ENCODE measurements at regions of chr19 and their contacts with region 1.

Region 1: GRCh38 chr19:14405758-14406644 is 13.1 kb downstream of the DDX39A start:
- DNase-seq: peak; percentile 75 to 95 (median 88)
- ATAC-seq: peak; percentile 83
- H3K4me3 ChIP-seq: no peak overlapping the region
- H3K4me3 Mint-ChIP-seq: no peak overlapping the region
- H3K27ac ChIP-seq: peak overlapping the region; percentile 19 to 62
- H3K27ac Mint-ChIP-seq: peak overlapping the region; percentile 71
- H3K4me1 ChIP-seq: peaks cover 37% of the 10 kb centered on the region
- H3K4me1 Mint-ChIP-seq: peaks cover 22% of the 10 kb centered on the region
- H3K27me3 ChIP-seq: no peaks in the 10 kb centered on the region
- H3K27me3 Mint-ChIP-seq: no peaks in the 10 kb centered on the region
- CTCF ChIP-seq: peak; percentile 91

Region 2: DNA sequence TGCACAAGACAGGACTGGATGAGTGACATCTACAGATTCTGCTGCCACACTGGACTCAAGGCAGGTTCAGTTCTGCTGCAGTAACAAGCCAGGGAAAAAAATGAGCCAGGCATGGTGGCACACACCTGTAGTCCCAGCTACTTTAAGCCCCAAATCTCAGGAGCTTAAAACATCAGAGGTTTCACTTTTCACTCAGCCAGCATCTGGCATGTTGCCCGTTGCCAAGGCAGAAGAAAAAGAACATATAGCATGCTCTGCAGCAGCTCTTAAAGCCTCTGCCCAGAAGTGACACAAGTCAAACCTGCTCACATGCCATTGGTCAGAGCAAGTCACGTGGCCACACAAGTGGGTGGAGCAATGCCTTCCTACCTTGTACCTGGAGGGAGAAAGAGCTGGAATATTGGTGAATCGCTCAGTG is 39.5 kb before region 1 on chr19:
- CTCF ChIA-PET with region 1: interaction called, 218 read pairs
- POLR2A ChIA-PET with region 1: interaction called, 15 read pairs
- intact Hi-C with region 1: loop called (anchors 1 kb)
- DNase-seq: peak; percentile 83 to 97 (median 90)
- ATAC-seq: peak; percentile 45
- H3K4me3 ChIP-seq: no peak overlapping the region
- H3K4me3 Mint-ChIP-seq: peak overlapping the region; percentile 57
- H3K27ac ChIP-seq: peak overlapping the region; percentile 98 to 100
- H3K27ac Mint-ChIP-seq: peak overlapping the region; percentile 99
- H3K4me1 ChIP-seq: peaks cover 81% of the 10 kb centered on the region
- H3K4me1 Mint-ChIP-seq: peaks cover 68% of the 10 kb centered on the region
- H3K27me3 ChIP-seq: no peaks in the 10 kb centered on the region
- H3K27me3 Mint-ChIP-seq: no peaks in the 10 kb centered on the region
- CTCF ChIP-seq: no peak

Region 3: DNA sequence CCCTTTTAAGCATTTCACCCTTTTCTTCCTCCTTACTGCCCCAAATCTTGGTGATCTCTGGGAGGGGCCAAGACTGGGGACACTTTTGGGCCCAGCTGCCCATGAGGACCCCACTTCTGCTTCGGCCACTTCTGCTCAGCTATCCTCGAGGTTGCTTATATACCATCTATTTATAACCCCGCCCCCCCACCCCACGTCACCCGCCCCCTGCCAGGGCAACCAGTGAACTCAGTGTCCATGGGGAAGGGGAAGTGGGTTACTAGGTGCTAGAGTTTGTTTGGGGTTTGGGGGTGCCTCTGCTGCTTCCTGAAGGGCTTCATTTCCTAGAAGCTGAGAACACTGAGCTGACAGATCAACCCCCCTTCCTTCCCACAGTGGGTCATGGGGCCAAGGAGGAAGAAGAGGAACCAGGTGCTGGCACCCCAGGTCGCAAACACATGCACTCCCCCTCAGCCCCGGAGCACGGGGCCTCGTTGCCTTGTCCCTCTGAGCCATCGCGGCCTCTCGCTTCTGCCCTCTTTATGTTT is 30.9 kb before region 1 on chr19:
- CTCF ChIA-PET with region 1: interaction called, 10 read pairs
- POLR2A ChIA-PET with region 1: interaction called, 4 read pairs
- intact Hi-C with region 1: no loop called
- DNase-seq: peak in 8 of 9 experiments; percentile 69 to 97 (median 78)
- ATAC-seq: peak; percentile 78
- H3K4me3 ChIP-seq: peak overlapping the region; percentile 17 to 18
- H3K4me3 Mint-ChIP-seq: peak overlapping the region; percentile 61
- H3K27ac ChIP-seq: peak overlapping the region; percentile 98 to 100
- H3K27ac Mint-ChIP-seq: peak overlapping the region; percentile 99
- H3K4me1 ChIP-seq: peaks cover 76% of the 10 kb centered on the region
- H3K4me1 Mint-ChIP-seq: peaks cover 65% of the 10 kb centered on the region
- H3K27me3 ChIP-seq: no peaks in the 10 kb centered on the region
- H3K27me3 Mint-ChIP-seq: no peaks in the 10 kb centered on the region
- CTCF ChIP-seq: no peak

Region 4: DNA sequence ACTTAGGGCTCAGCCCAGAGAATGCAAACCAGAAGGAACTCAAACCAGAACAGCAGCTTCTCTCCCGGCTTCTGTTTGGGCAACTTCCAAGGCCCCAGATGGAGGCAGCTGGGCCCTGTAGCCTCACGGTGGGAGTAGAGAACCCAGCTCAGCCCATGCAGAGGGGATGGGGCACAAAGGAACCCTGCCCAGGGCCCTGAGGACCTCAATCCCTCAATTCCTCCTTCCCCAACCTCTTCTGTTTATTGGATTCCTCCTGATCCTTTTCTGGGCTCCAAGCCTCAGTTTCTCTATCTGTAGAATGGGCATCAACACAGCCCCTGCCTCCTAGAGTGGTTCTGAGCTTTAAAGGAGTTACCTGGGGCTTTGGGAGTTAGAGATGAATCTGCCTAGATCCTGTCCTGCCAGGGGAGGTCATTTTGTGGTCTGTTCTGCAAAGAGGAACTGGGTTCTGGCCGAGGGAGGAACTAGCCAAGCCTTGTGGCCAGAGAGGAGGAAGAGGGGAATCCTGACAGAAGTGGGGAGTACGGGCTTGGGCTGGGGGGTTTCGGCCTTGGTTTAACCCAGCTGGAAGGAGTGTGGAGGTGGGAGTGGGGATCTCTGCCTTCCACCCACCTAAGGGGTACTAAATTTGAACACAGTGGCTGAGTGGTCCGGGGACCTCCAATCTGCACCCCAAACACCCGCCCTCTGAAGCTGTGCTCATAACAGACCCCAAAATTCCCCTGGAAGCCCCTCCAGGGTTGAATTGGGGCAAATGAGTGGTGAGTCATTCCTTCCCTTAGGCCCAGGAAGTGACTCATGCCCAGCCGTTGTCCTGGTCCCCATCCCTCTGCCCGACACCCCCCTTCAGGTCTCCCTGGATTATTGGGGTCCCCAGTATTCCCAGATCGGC is 22.1 kb before region 1 on chr19:
- CTCF ChIA-PET with region 1: interaction called, 21 read pairs
- POLR2A ChIA-PET with region 1: interaction called, 10 read pairs
- intact Hi-C with region 1: loop called (anchors 1 to 2 kb)
- DNase-seq: peak in 7 of 9 experiments; percentile 52 to 89 (median 73)
- ATAC-seq: peak; percentile 10
- H3K4me3 ChIP-seq: peak overlapping the region; percentile 69 to 82
- H3K4me3 Mint-ChIP-seq: peak overlapping the region; percentile 90
- H3K27ac ChIP-seq: peak overlapping the region; percentile 75 to 97
- H3K27ac Mint-ChIP-seq: peak overlapping the region; percentile 94
- H3K4me1 ChIP-seq: peaks cover 39% of the 10 kb centered on the region
- H3K4me1 Mint-ChIP-seq: peaks cover 41% of the 10 kb centered on the region
- H3K27me3 ChIP-seq: no peaks in the 10 kb centered on the region
- H3K27me3 Mint-ChIP-seq: no peaks in the 10 kb centered on the region
- CTCF ChIP-seq: no peak

Region 5: GRCh38 chr19:14395710-14396336 is 10.2 kb before region 1 on chr19:
- CTCF ChIA-PET with region 1: interaction called, 11 read pairs
- POLR2A ChIA-PET with region 1: interaction called, 7 read pairs
- intact Hi-C with region 1: no loop called
- DNase-seq: peak in 1 of 9 experiments; percentile 32
- ATAC-seq: no peak
- H3K4me3 ChIP-seq: no peak overlapping the region
- H3K4me3 Mint-ChIP-seq: no peak overlapping the region
- H3K27ac ChIP-seq: no peak overlapping the region
- H3K27ac Mint-ChIP-seq: no peak overlapping the region
- H3K4me1 ChIP-seq: no peaks in the 10 kb centered on the region
- H3K4me1 Mint-ChIP-seq: peaks cover 6% of the 10 kb centered on the region
- H3K27me3 ChIP-seq: no peaks in the 10 kb centered on the region
- H3K27me3 Mint-ChIP-seq: no peaks in the 10 kb centered on the region
- CTCF ChIP-seq: no peak

Region 6: GRCh38 chr19:14419106-14419813 is 13.3 kb after region 1 on chr19 and contains the start of gene DDX39A:
- CTCF ChIA-PET with region 1: interaction called, 15 read pairs
- POLR2A ChIA-PET with region 1: interaction called, 13 read pairs
- intact Hi-C with region 1: no loop called
- DNase-seq: peak; percentile 92 to 99 (median 96)
- ATAC-seq: peak; percentile 86
- H3K4me3 ChIP-seq: peak within 1 kb of the TSS; percentile 63 to 96
- H3K4me3 Mint-ChIP-seq: peak within 1 kb of the TSS; percentile 92
- H3K27ac ChIP-seq: peak within 1 kb of the TSS; percentile 61 to 94
- H3K27ac Mint-ChIP-seq: peak within 1 kb of the TSS; percentile 95
- H3K4me1 ChIP-seq: peaks cover 42% of the 10 kb centered on the region
- H3K4me1 Mint-ChIP-seq: peaks cover 42% of the 10 kb centered on the region
- H3K27me3 ChIP-seq: no peaks in the 10 kb centered on the region
- H3K27me3 Mint-ChIP-seq: no peaks in the 10 kb centered on the region
- CTCF ChIP-seq: no peak
- total RNA-seq, gene DDX39A: 342 to 372 TPM

Region 7: DNA sequence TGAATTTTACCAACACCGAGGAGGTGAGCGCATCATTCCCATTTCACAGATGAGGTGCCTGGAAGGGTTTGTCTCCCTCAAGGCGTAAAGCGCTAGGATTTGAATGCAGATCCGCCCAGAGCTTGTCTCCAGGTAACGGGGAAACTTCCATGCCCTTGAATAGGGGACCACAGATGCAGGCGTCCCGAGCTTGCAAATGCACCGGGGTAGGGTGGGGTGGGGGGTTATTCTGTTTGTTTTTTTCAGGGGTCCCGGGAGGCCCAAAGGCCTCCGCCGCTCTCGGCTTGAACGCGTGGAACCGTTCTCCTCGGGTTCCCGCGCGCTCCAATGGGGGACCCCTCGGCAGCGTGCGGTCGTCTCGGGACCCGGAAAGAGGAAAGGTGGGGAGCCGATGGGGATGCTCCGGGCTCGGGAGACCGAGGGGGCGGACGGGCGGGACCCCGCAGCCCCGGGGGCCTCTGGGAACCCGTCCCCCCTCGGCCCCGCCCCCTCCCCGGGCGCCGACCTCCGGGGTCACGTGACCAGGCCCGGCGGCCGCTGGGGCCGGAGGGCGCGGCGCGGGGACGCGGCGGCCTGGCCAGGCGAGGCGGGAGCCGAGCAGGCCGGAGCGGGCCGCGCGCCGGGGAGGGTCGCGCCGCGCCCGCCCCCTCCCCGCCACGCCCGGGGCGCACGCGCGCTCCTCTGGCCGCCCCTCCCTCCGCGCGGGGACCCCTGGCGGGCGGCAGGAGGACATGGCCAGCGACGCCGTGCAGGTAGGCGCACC is 27.0 kb after region 1 on chr19 and contains the start of gene PKN1:
- CTCF ChIA-PET with region 1: interaction called, 18 read pairs
- POLR2A ChIA-PET with region 1: interaction called, 3 read pairs
- intact Hi-C with region 1: no loop called
- DNase-seq: peak in 7 of 9 experiments; percentile 39 to 72 (median 52)
- ATAC-seq: peak; percentile 18
- H3K4me3 ChIP-seq: peak within 1 kb of the TSS; percentile 83 to 85
- H3K4me3 Mint-ChIP-seq: peak within 1 kb of the TSS; percentile 89
- H3K27ac ChIP-seq: peak within 1 kb of the TSS; percentile 68 to 85
- H3K27ac Mint-ChIP-seq: peak within 1 kb of the TSS; percentile 90
- H3K4me1 ChIP-seq: peaks cover 43% of the 10 kb centered on the region
- H3K4me1 Mint-ChIP-seq: peaks cover 39% of the 10 kb centered on the region
- H3K27me3 ChIP-seq: no peaks in the 10 kb centered on the region
- H3K27me3 Mint-ChIP-seq: no peaks in the 10 kb centered on the region
- CTCF ChIP-seq: no peak
- total RNA-seq, gene PKN1: 152 to 158 TPM

Measured in CD8-positive, alpha-beta T cell (primary cell).